ENCODE measurements at regions of chr20 and their contacts with region 1.

Region 1: DNA sequence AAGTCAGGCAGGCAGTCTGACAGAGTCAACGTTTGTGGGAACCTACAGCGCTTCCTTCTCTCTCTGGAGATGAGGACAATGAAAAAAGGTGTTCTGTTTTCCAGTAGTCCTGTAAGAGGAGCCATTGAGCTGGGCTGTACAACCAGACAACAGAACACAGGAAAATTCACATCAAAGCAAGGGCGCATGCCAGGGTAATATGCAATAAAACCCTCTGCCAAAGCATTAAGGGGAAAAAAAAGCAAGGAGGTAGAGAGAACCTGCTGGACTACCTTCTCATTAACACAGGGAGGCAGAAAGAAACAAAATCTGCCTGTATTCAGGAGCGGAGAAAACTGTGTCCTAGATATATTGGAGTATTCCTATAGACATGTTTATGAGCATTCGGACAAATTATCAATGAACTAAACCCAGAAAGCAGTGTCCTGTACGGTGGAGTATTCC is 1.3 kb downstream of the RNF24 start:
- H3K4me3 Mint-ChIP-seq: peak overlapping the region; percentile 97
- H3K27ac Mint-ChIP-seq: peak overlapping the region; percentile 78
- H3K4me1 Mint-ChIP-seq: peaks cover 67% of the 10 kb centered on the region
- H3K27me3 Mint-ChIP-seq: no peaks in the 10 kb centered on the region

Region 2: GRCh38 chr20:4027590-4028265 is 13.7 kb after region 1 on chr20:
- intact Hi-C with region 1: no loop called
- H3K4me3 Mint-ChIP-seq: no peak overlapping the region
- H3K27ac Mint-ChIP-seq: peak overlapping the region; percentile 28
- H3K4me1 Mint-ChIP-seq: peaks cover 33% of the 10 kb centered on the region
- H3K27me3 Mint-ChIP-seq: no peaks in the 10 kb centered on the region

Region 3: DNA sequence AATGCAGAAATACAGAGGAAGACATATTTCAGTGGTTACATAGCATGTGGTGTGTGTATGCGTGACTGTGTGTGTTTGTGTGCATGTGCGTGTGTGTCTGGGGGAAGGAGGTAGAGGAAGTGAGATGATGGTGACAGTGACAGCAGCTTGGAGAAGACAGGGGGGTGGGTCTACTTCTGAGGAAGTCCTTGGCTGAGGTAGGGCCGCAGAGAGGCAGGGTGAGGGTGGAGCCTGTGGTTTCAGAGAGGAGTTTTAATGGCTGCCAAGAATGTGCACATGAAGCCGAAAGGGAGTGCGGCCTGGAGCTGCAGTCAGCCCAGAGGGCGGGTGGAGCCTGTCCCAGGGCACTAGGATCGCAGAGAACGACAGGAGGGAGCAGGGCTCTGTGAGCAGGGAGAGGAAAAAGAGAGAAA is 24.0 kb after region 1 on chr20:
- intact Hi-C with region 1: no loop called
- H3K4me3 Mint-ChIP-seq: peak overlapping the region; percentile 68
- H3K27ac Mint-ChIP-seq: peak overlapping the region; percentile 93
- H3K4me1 Mint-ChIP-seq: peaks cover 51% of the 10 kb centered on the region
- H3K27me3 Mint-ChIP-seq: no peaks in the 10 kb centered on the region

Region 4: GRCh38 chr20:4050203-4050980 is 36.3 kb after region 1 on chr20:
- intact Hi-C with region 1: no loop called
- H3K4me3 Mint-ChIP-seq: no peak overlapping the region
- H3K27ac Mint-ChIP-seq: no peak overlapping the region
- H3K4me1 Mint-ChIP-seq: peaks cover 44% of the 10 kb centered on the region
- H3K27me3 Mint-ChIP-seq: peaks cover 3% of the 10 kb centered on the region

Region 5: GRCh38 chr20:4076671-4077070 is 62.6 kb after region 1 on chr20:
- intact Hi-C with region 1: loop called (anchors 1 kb)
- H3K4me3 Mint-ChIP-seq: no peak overlapping the region
- H3K27ac Mint-ChIP-seq: no peak overlapping the region
- H3K4me1 Mint-ChIP-seq: peaks cover 62% of the 10 kb centered on the region
- H3K27me3 Mint-ChIP-seq: no peaks in the 10 kb centered on the region

Region 6: DNA sequence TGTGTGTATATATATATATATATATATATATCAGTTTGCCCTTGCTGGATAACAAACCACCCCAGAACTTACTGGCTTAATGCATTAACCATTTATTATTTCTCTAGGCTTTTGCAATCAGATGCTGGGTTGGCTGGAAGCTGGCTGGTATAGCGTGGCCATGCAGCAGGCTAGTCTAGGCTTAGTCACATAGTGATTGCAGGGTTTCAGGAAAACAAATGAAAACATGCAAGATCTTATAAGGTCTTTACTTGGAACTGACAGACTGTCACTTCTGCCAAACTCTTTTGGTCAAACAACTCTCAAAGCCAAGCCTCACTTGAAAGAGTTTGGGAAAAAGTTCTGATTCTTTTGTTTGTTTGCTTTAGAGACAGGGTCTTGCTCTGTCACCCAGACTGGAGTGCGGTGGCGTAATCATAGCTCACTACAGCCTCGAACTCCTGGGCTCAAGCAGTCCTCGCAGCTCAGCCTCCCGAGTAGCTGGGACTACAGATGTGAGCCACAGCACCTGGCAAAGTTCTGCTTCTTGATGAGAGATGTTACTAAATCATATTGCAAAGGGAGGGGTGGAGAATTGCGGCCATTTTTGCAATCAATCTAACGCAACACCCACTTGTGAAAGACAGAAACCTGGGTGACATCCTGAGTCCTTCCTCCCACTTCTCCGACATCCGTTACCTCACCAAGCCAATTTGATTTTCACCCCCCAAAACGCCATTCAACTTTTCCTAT is 75.9 kb after region 1 on chr20:
- intact Hi-C with region 1: loop called (anchors 5 kb)
- H3K4me3 Mint-ChIP-seq: no peak overlapping the region
- H3K27ac Mint-ChIP-seq: no peak overlapping the region
- H3K4me1 Mint-ChIP-seq: peaks cover 59% of the 10 kb centered on the region
- H3K27me3 Mint-ChIP-seq: no peaks in the 10 kb centered on the region

Measured in dendritic cell treated with granulocyte-macrophage colony-stimulating factor and Interleukin-4, amounts not matched to agents 40 ng/mL and 50 ng/mL, for 4 days (primary cell).